Stomach (tissue), 19 donors: ENCODE measurements at regions of chr9 and their contacts with region 1.

Region 1: DNA sequence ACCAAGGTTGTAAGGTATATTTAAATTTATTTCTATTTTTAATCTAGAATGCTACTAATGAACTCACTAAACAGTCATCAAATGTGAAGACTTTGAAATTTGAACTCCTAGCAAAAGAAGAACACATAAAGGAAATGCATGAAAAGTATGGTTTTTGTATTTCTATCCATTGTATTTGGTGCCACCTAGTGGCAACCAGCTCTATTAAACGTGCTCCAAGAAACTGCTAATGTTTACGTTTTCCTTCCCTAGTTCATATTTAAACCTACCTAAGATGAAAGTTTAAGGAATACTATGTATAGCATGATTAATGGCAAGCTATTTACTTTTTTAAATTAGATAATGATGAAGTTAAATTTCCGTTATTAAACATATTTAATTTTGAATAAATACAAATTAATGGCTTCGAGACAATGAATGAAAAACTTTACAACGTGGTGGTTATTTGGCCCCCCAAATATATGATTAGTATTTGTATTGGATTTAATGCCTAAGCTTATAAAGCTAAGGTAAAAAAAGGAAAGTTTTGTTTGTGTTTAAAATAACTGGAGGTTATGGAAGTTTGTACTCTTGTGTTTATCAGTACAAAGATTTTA is 115.9 kb upstream of the SH3GL2 start:
- DNase-seq: peak; percentile 36 to 84
- H3K4me3 ChIP-seq: no peak overlapping the region
- H3K27ac ChIP-seq: no peak overlapping the region
- H3K4me1 ChIP-seq: no peaks in the 10 kb centered on the region
- H3K27me3 ChIP-seq: no peaks in the 10 kb centered on the region
- CTCF ChIP-seq: peak in 5 of 7 experiments; percentile 30 to 71 (median 57)
- EP300 ChIP-seq: no peak
- POLR2A ChIP-seq: no peak

Region 2: DNA sequence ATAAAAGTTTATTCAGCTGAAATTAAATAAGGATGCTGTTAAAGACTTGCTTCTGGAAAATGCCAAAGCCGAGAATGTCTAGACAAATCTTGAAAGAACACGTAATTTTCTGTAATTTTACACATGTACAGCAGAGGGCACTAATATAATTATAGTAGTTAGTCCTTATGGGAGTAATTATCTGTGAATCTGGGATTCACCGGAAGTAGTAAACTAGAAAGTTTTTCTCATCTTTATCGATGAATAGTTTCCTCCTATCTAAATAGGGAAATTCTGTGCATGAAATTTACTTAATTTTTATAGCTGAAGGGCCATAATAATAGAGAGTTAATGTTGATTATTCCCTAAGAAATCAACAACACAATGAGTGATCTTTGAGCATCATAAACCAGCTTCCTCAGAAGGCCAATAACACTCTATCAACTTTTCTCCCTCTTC is 346.5 kb before region 1 on chr9:
- intact Hi-C with region 1: loop called (anchors 10 kb)
- DNase-seq: peak in 1 of 2 donors; percentile 50
- H3K4me3 ChIP-seq: no peak overlapping the region
- H3K27ac ChIP-seq: no peak overlapping the region
- H3K4me1 ChIP-seq: no peaks in the 10 kb centered on the region
- H3K27me3 ChIP-seq: no peaks in the 10 kb centered on the region
- CTCF ChIP-seq: peak in 4 of 7 experiments; percentile 29 to 43 (median 38)
- EP300 ChIP-seq: no peak
- POLR2A ChIP-seq: no peak